ENCODE measurements at regions of chr1 and their contacts with region 1.

Region 1: DNA sequence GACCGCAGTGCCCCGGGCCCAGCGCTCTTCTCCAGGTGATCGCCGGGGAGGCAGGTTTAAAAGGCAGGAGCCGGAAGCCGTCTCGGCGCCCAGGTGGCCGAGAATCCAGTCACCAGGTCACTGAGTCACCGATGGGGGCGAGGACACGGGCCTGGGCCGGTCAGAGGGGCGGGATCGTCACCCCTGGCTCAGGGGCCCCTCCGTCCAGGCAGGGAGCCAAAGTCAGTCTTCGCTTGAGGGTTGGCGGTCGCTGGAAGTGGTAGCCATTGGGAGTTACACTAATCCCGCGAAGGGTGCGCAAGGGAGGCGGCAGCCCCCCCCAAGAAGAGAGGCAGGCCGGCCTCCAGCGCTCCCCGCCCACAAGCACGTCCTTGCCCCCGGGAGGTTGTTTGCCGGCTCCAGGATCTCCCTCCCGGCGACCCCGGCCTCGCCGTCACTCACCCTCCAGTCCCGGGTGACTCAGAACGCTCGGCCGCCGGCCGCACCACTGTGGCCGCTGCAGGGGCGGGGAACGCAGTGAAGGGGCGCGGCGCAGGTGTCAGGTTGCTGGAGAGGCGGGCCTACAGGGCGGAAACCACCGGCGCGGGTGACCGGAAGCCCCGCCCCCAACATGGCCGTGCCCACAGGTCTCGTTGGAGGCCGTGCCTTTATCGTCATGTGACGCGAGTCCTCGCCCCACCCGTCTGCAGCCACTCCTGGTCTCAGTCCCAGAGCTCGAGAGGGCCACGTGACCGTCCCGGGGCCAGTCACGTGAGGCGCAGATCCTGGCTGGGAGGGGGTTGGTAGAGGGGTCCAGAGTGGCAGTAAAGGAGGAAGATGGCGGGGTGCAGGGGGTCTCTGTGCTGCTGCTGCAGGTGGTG is at the starts of genes CLCN6 and MTHFR:
- DNase-seq: peak; percentile 97 to 99 (median 98)
- H3K4me3 ChIP-seq: peak within 1 kb of the TSS; percentile 37 to 86
- H3K4me3 Mint-ChIP-seq: peak within 1 kb of the TSS; percentile 96 to 100 (median 98)
- H3K27ac ChIP-seq: peak within 1 kb of the TSS; percentile 73
- H3K27ac Mint-ChIP-seq: peak within 1 kb of the TSS; percentile 92 to 100 (median 99)
- H3K4me1 ChIP-seq: peaks cover 55% of the 10 kb centered on the region
- H3K4me1 Mint-ChIP-seq: peaks cover 35 to 76% (median 58%) of the 10 kb centered on the region in 4 donors
- H3K27me3 ChIP-seq: no peaks in the 10 kb centered on the region
- H3K27me3 Mint-ChIP-seq: no peaks in the 10 kb centered on the region
- total RNA-seq, gene CLCN6: 20.8 to 20.9 TPM
- total RNA-seq, gene MTHFR: 52.7 to 54.2 TPM

Region 2: DNA sequence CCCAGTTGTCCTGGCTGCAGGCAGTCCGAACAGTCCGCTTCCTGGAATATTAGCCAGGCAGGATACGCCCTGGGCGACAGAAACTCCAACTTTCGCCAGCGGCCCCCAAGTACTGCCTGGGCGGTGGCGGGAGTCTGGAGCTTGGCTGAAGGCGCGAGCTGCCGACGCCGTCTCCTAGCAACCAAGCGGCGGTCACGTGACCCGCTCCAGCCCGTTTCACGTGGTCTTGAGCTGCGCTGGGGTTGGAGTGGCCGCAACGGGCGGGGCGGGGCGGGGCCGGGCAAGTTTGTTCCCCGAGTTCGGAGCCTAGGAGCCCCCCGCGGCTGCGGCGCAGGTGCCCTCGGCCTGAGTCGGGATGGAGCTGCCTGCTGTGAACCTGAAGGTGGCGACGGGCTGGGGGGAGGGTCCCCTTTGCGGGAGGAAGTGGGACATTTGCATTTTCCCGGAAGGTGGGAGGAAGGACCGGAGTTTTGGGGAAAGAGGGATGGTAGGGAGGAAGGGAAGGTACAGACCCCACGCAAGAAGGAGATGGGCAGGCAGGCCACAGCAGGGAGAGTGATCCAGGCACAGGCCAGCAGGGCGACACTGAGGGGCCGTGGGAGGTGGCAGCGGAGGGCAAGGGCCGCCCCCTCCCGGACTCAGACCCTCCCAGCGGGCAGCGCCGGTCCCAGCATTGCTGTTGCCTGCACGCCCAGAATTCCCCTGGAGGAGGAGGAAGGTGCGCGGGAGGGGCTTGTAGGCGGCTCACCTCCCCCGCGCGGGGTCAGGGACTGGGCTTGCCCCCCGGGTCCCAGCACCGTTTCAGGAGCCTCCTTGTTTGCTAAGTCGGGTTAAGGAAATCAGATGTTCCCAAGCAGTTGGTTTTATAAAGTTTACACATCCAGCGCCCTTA is 69.6 kb before region 1 on chr1 and contains the start of gene AGTRAP:
- CTCF ChIA-PET with region 1: interaction called, 4 read pairs
- POLR2A ChIA-PET with region 1: interaction called, 5 read pairs
- intact Hi-C with region 1: loop called (anchors 2 kb)
- DNase-seq: peak; percentile 77 to 89 (median 79)
- H3K4me3 ChIP-seq: peak within 1 kb of the TSS; percentile 84 to 93
- H3K4me3 Mint-ChIP-seq: peak within 1 kb of the TSS; percentile 89 to 97 (median 92)
- H3K27ac ChIP-seq: peak within 1 kb of the TSS; percentile 81
- H3K27ac Mint-ChIP-seq: peak within 1 kb of the TSS; percentile 44 to 93 (median 87)
- H3K4me1 ChIP-seq: peaks cover 60% of the 10 kb centered on the region
- H3K4me1 Mint-ChIP-seq: peaks cover 39 to 81% (median 56%) of the 10 kb centered on the region in 4 donors
- H3K27me3 ChIP-seq: no peaks in the 10 kb centered on the region
- H3K27me3 Mint-ChIP-seq: no peaks in the 10 kb centered on the region
- total RNA-seq, gene AGTRAP: 19.0 to 21.7 TPM

Region 3: DNA sequence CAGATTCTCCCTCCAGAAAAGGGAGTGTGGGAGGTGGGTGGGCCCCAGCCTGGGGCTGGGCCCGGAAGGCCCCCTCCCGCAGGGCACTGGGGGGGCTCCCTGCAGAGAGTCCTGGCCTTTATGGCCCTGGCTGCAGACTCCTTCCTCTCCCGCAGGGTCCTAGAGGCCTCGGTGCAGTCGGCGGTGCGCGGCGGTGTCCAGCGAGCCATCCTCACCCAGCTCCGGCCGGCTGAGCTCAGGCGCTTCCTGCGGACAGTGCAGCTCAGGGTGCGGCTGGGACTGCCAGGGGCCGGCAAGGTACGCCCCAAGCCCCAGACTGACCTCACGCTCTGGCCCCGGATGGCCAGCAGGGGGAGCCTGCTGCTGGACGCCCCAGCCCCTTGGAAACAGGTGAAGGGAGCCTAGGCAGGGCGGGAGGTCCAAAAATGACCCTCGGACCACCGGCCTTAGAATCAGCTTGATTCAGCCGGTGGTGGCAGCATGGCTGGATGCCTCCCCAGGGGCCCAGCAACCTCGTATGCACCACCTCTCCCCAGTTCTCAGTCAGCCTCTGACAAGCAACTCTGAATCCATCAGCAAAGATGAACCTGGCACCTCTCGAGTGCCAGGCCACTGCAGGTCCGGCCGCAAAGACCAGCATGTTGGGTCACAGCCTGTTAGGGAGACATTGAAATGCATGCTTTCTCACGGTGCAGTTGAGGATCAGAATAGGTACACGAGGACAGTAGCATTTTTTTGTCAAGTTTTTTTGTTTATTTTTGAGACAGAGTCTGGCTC is 20.5 kb before region 1 on chr1:
- CTCF ChIA-PET with region 1: interaction called, 7 read pairs
- POLR2A ChIA-PET with region 1: interaction called, 5 read pairs
- intact Hi-C with region 1: loop called (anchors 2 kb)
- DNase-seq: peak in 1 of 5 donors; percentile 34
- H3K4me3 ChIP-seq: no peak overlapping the region
- H3K4me3 Mint-ChIP-seq: peak overlapping the region in 2 of 8 donors; percentile 43 to 54
- H3K27ac ChIP-seq: no peak overlapping the region
- H3K27ac Mint-ChIP-seq: no peak overlapping the region
- H3K4me1 ChIP-seq: peaks cover 12% of the 10 kb centered on the region
- H3K4me1 Mint-ChIP-seq: peaks cover 2 to 9% (median 5%) of the 10 kb centered on the region in 4 donors
- H3K27me3 ChIP-seq: no peaks in the 10 kb centered on the region
- H3K27me3 Mint-ChIP-seq: no peaks in the 10 kb centered on the region

Measured in CD4-positive, alpha-beta memory T cell (primary cell).